ENCODE measurements at regions of chr11 and their contacts with region 1.

Region 1: DNA sequence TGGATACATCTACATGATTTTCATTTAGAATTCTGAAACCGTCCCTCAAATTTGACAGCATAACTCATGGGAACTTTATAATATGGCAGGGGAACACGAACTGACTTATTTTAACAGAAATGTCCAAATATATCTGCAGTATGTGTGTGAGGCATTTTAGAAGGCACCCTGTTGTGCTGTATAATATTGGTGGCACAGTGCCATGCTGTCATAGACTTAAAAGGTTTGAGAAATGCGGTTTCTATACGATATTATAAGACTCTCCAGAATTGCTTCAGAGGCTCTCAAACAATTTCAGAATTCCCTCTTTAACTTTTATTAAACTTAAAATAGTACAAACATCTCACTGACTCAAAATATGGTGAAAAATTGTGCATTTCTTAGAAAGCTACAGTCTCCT is 181.6 kb downstream of the MSANTD4 start:
- DNase-seq: no peak
- ATAC-seq: no peak
- H3K4me3 ChIP-seq: no peak overlapping the region
- H3K27ac ChIP-seq: no peak overlapping the region
- H3K4me1 ChIP-seq: no peaks in the 10 kb centered on the region
- H3K27me3 ChIP-seq: no peaks in the 10 kb centered on the region
- CTCF ChIP-seq: no peak
- EP300 ChIP-seq: no peak
- POLR2A ChIP-seq: no peak
- RAD21 ChIP-seq: no peak

Region 2: GRCh38 chr11:105644839-105645573 is 195.4 kb before region 1 on chr11:
- CTCF ChIA-PET with region 1: no interaction called
- POLR2A ChIA-PET with region 1: no interaction called
- in situ Hi-C with region 1: no loop called
- intact Hi-C with region 1: no loop called
- DNase-seq: no peak
- ATAC-seq: no peak
- H3K4me3 ChIP-seq: no peak overlapping the region
- H3K27ac ChIP-seq: no peak overlapping the region
- H3K4me1 ChIP-seq: no peaks in the 10 kb centered on the region
- H3K27me3 ChIP-seq: no peaks in the 10 kb centered on the region
- CTCF ChIP-seq: no peak
- EP300 ChIP-seq: no peak
- POLR2A ChIP-seq: no peak
- RAD21 ChIP-seq: no peak

Region 3: DNA sequence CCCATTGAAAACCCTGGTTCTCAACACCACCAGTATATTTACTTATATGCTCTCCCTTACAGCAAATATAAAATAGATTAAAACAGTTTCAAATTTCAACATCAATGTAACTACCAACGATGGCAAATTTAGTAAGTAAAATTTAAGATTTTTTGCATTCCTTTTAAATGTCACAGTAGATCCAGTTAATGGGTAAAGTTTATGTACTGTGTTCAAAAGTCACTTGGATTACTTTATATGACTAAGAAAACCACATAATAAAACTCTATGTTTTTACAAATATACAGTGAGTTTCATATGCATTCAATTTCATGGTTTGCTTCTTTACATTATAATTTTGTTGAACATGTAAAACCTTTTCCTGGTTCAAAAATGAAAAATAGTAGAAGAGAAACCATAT is 601.6 kb after region 1 on chr11:
- CTCF ChIA-PET with region 1: no interaction called
- POLR2A ChIA-PET with region 1: no interaction called
- in situ Hi-C with region 1: no loop called
- intact Hi-C with region 1: loop called (anchors 5 kb)
- DNase-seq: no peak
- ATAC-seq: no peak
- H3K4me3 ChIP-seq: no peak overlapping the region
- H3K27ac ChIP-seq: no peak overlapping the region
- H3K4me1 ChIP-seq: no peaks in the 10 kb centered on the region
- H3K27me3 ChIP-seq: no peaks in the 10 kb centered on the region
- CTCF ChIP-seq: no peak
- EP300 ChIP-seq: no peak
- POLR2A ChIP-seq: no peak
- RAD21 ChIP-seq: no peak